Panc1 (cell line): ENCODE measurements at regions of chr2 and their contacts with region 1.

Region 1: DNA sequence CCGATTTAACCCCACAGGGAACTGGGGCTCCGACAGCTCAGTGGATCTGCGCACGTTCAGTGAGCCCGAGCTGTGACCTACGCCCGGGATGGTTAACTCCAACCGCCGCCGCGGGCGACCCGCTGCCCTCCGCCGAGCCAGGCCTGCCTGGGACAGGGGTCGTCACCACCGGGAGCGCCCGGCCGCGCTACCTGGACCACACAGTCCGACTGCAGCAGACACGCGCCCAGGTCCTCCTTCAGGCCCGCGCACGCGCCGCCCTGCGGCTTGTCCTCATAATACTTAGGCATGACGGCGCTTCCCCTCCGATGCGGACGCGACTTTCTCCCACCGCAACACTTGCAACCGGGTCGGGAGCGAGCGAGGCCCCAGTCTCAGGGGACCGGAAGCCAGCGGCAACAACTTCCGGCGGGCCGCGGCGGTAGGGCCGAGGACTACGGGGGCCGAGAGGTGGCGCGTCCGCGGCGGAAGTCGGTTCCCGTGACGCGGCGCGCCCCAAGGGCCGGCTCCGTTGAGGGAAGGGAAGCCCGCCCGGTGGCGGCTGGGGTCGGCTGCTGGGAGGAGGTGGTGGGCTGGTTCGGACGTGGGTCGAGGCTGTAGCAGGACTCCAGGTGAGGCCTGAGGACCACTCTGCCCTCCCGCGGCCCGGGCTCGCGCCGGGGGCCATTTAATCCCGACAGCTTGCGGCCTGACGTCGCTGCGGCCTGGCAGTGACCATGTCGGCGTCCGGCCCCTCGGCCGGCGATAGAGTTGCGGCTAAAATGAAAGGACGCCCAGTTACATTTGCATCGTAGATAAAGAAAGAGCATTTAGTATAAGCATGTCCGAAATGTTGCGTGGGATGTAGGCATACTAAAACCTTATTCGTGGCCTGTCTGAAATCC is at the starts of genes COA5 and UNC50:
- DNase-seq: no peak
- ATAC-seq: peak; percentile 98
- H3K4me3 ChIP-seq: peak within 1 kb of the TSS; percentile 98
- H3K27ac ChIP-seq: peak within 1 kb of the TSS; percentile 96
- H3K4me1 ChIP-seq: peaks cover 22% of the 10 kb centered on the region
- H3K27me3 ChIP-seq: no peaks in the 10 kb centered on the region
- CTCF ChIP-seq: no peak
- total RNA-seq, gene COA5: 20.6 TPM
- total RNA-seq, gene UNC50: 43.6 TPM

Region 2: GRCh38 chr2:98623657-98624056 is 15.3 kb after region 1 on chr2:
- CTCF ChIA-PET with region 1: no interaction called
- POLR2A ChIA-PET with region 1: interaction called, 10 read pairs
- in situ Hi-C with region 1: no loop called
- intact Hi-C with region 1: no loop called
- DNase-seq: no peak
- ATAC-seq: no peak
- H3K4me3 ChIP-seq: no peak overlapping the region
- H3K27ac ChIP-seq: no peak overlapping the region
- H3K4me1 ChIP-seq: no peaks in the 10 kb centered on the region
- H3K27me3 ChIP-seq: no peaks in the 10 kb centered on the region; the same call in 1 of the 2 replicates
- CTCF ChIP-seq: no peak